ENCODE measurements at regions of chr12 and their contacts with region 1.

Region 1: DNA sequence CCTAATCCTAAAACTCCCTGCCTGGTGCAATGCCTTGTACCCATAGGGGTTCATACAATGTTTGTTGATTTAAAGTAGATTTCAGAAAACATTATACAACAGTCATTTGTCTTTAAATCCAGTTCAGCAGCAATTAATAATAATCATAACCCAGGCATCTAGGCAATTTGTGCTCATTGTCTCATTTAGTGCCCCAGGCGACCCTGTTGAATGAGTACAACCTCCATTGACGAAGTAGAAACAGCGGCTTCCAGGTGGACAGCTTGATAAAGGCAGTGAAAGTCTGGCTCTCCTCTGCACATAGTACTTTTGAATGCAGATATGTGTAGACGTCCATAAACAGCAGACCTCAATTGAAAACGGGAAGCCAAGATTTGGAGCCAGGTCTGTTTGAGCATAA is 82.9 kb upstream of the CPM start:
- DNase-seq: no peak
- H3K4me3 ChIP-seq: no peak overlapping the region
- H3K27ac ChIP-seq: no peak overlapping the region
- H3K4me1 ChIP-seq: no peaks in the 10 kb centered on the region
- H3K27me3 ChIP-seq: peaks cover 1 to 8% of the 10 kb centered on the region in 2 experiments
- CTCF ChIP-seq: no peak
- POLR2A ChIP-seq: no peak

Region 2: GRCh38 chr12:68831272-68831671 is 184.6 kb before region 1 on chr12:
- CTCF ChIA-PET with region 1: no interaction called
- POLR2A ChIA-PET with region 1: no interaction called
- dilution Hi-C with region 1: no loop called
- intact Hi-C with region 1: no loop called
- DNase-seq: no peak
- H3K4me3 ChIP-seq: no peak overlapping the region
- H3K27ac ChIP-seq: no peak overlapping the region
- H3K4me1 ChIP-seq: peaks cover 4% of the 10 kb centered on the region
- H3K27me3 ChIP-seq: no peaks in the 10 kb centered on the region
- CTCF ChIP-seq: no peak
- POLR2A ChIP-seq: no peak

Region 3: GRCh38 chr12:68932961-68933893 is 82.6 kb before region 1 on chr12 and contains the start of gene CPM:
- CTCF ChIA-PET with region 1: no interaction called
- POLR2A ChIA-PET with region 1: no interaction called
- dilution Hi-C with region 1: no loop called
- intact Hi-C with region 1: loop called (anchors 5 kb)
- DNase-seq: no peak
- H3K4me3 ChIP-seq: peak within 1 kb of the TSS in 1 of 3 experiments; percentile 17
- H3K27ac ChIP-seq: no peak within 1 kb of the TSS
- H3K4me1 ChIP-seq: no peaks in the 10 kb centered on the region
- H3K27me3 ChIP-seq: peaks cover 23 to 31% of the 10 kb centered on the region in 2 experiments
- CTCF ChIP-seq: no peak
- POLR2A ChIP-seq: no peak
- total RNA-seq, gene CPM: not detected in 2 replicates